ENCODE measurements at regions of chr5 and their contacts with region 1.

Region 1: GRCh38 chr5:139262742-139263445 is 30.6 kb upstream of the MATR3 start:
- DNase-seq: peak; percentile 88 to 92 (median 90)
- H3K4me3 ChIP-seq: no peak overlapping the region
- H3K27ac ChIP-seq: peak overlapping the region; percentile 36 to 63
- H3K4me1 ChIP-seq: no peaks in the 10 kb centered on the region
- H3K27me3 ChIP-seq: no peaks in the 10 kb centered on the region
- CTCF ChIP-seq: peak; percentile 91 to 93 (median 93)
- EP300 ChIP-seq: no peak
- POLR2A ChIP-seq: peak; percentile 25

Region 2: DNA sequence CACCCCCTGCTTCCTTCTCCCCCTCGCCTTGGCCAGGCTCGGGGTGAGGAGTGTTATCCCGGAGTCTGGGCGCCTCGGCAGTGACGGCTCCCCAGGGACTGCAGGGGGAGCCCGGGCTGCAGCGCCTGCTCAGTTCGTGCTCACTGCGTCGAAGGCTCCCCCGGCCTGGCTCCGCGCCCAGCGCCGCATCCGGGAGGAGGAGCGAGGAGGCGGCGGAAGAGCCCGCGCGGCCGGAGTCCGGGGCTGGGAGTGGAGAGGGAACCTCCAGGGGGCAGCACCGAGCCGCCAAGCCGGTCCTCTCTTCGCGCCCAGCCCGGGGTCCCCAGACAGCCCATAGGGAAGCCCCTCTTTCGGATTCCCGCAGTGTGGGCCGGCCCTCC is 798.9 kb before region 1 on chr5:
- intact Hi-C with region 1: loop called in 1 of 4 experiments (anchors 10 kb)
- DNase-seq: peak; percentile 96 to 99 (median 98)
- H3K4me3 ChIP-seq: peak overlapping the region; percentile 50
- H3K27ac ChIP-seq: peak overlapping the region; percentile 93 to 95
- H3K4me1 ChIP-seq: peaks cover 19% of the 10 kb centered on the region
- H3K27me3 ChIP-seq: no peaks in the 10 kb centered on the region
- CTCF ChIP-seq: peak; percentile 97 to 98 (median 97)
- EP300 ChIP-seq: no peak
- POLR2A ChIP-seq: peak; percentile 82

Region 3: GRCh38 chr5:138583984-138584637 is 678.8 kb before region 1 on chr5:
- intact Hi-C with region 1: loop called in 3 of 4 experiments (anchors 5 to 10 kb)
- DNase-seq: no peak
- H3K4me3 ChIP-seq: no peak overlapping the region
- H3K27ac ChIP-seq: no peak overlapping the region
- H3K4me1 ChIP-seq: no peaks in the 10 kb centered on the region
- H3K27me3 ChIP-seq: no peaks in the 10 kb centered on the region
- CTCF ChIP-seq: no peak
- EP300 ChIP-seq: no peak
- POLR2A ChIP-seq: no peak

Region 4: GRCh38 chr5:138594305-138595058 is 668.4 kb before region 1 on chr5:
- intact Hi-C with region 1: loop called (anchors 5 to 10 kb)
- DNase-seq: no peak
- H3K4me3 ChIP-seq: no peak overlapping the region
- H3K27ac ChIP-seq: no peak overlapping the region
- H3K4me1 ChIP-seq: no peaks in the 10 kb centered on the region
- H3K27me3 ChIP-seq: no peaks in the 10 kb centered on the region
- CTCF ChIP-seq: no peak
- EP300 ChIP-seq: no peak
- POLR2A ChIP-seq: no peak

Region 5: DNA sequence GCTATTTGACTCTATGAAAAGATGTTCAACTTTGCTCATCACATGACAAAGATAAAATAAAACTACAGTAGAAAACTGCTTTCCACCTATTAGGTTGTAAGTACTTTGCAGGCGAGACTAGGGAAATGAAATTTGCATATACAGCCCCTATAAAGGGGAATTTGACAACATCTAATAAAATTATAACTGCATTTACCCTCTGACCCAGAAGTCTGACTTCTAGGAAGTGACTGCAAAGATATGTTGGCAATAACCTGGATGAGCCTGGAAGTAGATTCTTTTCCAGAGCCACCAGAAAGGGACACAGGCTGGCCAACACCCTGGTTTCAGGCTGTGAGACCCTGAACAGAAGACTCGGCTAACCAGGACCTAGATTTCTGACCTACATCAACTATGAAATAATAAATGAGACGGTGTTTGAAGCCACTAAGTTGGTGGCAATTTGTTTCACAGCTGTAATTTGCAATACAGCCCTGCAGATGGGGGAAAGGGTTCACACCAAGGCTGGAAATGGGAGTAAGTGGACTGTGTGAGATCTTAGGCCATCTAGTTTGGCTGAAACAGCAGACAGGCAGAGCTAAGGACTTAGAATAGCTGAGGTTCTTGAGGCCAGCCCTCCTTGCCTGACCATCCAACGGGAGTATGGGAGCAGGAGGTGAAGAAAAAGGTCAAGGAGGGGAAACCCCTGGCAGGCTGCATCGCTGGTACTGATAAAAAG is 171.3 kb before region 1 on chr5:
- intact Hi-C with region 1: loop called in 3 of 4 experiments (anchors 5 kb)
- DNase-seq: peak in 2 of 5 donors; percentile 36 to 49
- H3K4me3 ChIP-seq: no peak overlapping the region
- H3K27ac ChIP-seq: peak overlapping the region in 1 of 2 donors; percentile 18
- H3K4me1 ChIP-seq: peaks cover 3% of the 10 kb centered on the region
- H3K27me3 ChIP-seq: no peaks in the 10 kb centered on the region
- CTCF ChIP-seq: peak in 2 of 3 donors; percentile 50 to 57
- EP300 ChIP-seq: no peak
- POLR2A ChIP-seq: no peak

Region 6: DNA sequence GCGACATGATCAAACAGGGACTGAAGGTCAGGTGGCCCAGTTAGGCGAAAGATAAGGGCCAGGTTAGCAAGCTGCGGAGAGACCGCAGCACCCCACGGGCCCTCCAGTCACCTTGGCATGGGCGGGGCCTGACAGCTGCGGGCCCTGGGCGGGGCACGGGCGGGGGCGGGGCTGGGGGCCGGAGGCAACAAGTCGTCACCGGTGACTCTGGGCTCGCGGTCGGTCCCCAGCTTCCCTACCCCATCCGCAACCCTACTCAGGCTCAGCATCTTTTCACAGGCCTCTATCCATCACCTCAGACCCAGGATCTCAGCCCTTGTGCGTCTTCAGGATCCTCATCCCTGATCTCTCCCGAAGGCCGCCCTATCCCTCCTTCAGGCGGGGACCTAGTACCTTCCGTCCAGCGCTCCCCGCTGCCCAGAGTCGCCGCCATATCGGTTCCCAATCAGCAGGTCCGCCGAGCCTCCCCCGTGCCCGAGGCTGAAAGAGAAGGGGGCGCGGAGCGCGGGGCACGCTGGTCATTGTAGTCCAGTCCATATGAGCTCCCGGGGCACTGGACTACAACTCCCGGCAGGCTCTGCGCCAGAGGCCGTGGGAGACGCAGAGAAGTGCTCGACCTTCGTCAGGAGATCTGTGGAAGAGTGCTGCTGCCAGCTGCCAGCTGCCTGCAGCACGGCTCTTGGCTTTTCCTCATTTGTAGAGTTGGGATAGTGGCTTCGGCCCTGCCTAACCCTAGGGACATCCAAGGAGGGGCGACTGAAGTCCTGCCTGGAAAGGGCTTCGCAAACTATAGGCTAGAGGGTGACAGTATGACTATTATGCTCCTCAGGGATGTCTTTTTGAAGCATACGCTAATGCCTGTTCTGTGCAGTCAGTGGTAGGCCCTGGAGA is 176.4 kb after region 1 on chr5 and contains the start of gene DNAJC18:
- intact Hi-C with region 1: no loop called
- DNase-seq: peak; percentile 93 to 96 (median 95)
- H3K4me3 ChIP-seq: peak within 1 kb of the TSS; percentile 83
- H3K27ac ChIP-seq: peak within 1 kb of the TSS; percentile 81 to 92
- H3K4me1 ChIP-seq: peaks cover 2% of the 10 kb centered on the region
- H3K27me3 ChIP-seq: no peaks in the 10 kb centered on the region
- CTCF ChIP-seq: no peak
- EP300 ChIP-seq: no peak
- POLR2A ChIP-seq: peak; percentile 47
- total RNA-seq, gene DNAJC18: 5.2 to 31.0 (median 22.4) TPM

Region 7: GRCh38 chr5:139605887-139606286 is 343.0 kb after region 1 on chr5:
- intact Hi-C with region 1: no loop called
- DNase-seq: no peak
- H3K4me3 ChIP-seq: no peak overlapping the region
- H3K27ac ChIP-seq: no peak overlapping the region
- H3K4me1 ChIP-seq: no peaks in the 10 kb centered on the region
- H3K27me3 ChIP-seq: no peaks in the 10 kb centered on the region
- CTCF ChIP-seq: no peak
- EP300 ChIP-seq: no peak
- POLR2A ChIP-seq: no peak